ENCODE measurements at regions of chr6 and their contacts with region 1.

Region 1: GRCh38 chr6:27687154-27688013 is 214.5 kb upstream of the ZNF184 start:
- DNase-seq: peak; percentile 92
- H3K4me3 Mint-ChIP-seq: peak overlapping the region; percentile 84
- H3K27ac Mint-ChIP-seq: peak overlapping the region; percentile 84
- H3K4me1 Mint-ChIP-seq: peaks cover 14% of the 10 kb centered on the region
- H3K27me3 Mint-ChIP-seq: no peaks in the 10 kb centered on the region
- CTCF ChIP-seq: peak; percentile 87

Region 2: GRCh38 chr6:27617700-27618689 is 69.4 kb before region 1 on chr6:
- CTCF ChIA-PET with region 1: interaction called, 5 read pairs
- intact Hi-C with region 1: loop called (anchors 5 kb)
- DNase-seq: peak; percentile 43
- H3K4me3 Mint-ChIP-seq: peak overlapping the region; percentile 77
- H3K27ac Mint-ChIP-seq: peak overlapping the region; percentile 36
- H3K4me1 Mint-ChIP-seq: peaks cover 7% of the 10 kb centered on the region
- H3K27me3 Mint-ChIP-seq: no peaks in the 10 kb centered on the region
- CTCF ChIP-seq: no peak

Measured in Calu3 (cell line).